Posterior vena cava (tissue), 2 donors: ENCODE measurements at regions of chr4 and their contacts with region 1.

Region 1: DNA sequence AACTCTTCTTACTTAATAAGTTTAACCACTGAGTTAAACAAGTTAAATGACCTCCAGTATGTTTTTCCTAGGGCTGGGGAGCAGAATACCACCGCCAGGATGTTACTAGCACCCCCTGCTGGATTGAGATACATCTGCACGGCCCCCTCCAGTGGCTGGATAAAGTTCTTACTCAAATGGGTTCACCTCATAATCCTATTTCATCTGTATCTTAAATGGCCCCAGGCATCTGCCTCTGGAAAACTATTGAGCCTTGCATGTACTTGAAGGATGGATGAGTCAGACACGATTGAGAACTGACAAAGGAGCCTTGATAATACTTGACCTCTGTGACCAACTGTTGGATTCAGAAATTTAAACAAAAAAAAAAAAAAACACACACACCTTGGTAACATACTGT is 61.5 kb upstream of the MMAA start:
- DNase-seq: no peak

Region 2: GRCh38 chr4:145234091-145234706 is 323.5 kb before region 1 on chr4:
- intact Hi-C with region 1: loop called in 1 of 2 experiments (anchors 5 kb)
- DNase-seq: no peak

Region 3: DNA sequence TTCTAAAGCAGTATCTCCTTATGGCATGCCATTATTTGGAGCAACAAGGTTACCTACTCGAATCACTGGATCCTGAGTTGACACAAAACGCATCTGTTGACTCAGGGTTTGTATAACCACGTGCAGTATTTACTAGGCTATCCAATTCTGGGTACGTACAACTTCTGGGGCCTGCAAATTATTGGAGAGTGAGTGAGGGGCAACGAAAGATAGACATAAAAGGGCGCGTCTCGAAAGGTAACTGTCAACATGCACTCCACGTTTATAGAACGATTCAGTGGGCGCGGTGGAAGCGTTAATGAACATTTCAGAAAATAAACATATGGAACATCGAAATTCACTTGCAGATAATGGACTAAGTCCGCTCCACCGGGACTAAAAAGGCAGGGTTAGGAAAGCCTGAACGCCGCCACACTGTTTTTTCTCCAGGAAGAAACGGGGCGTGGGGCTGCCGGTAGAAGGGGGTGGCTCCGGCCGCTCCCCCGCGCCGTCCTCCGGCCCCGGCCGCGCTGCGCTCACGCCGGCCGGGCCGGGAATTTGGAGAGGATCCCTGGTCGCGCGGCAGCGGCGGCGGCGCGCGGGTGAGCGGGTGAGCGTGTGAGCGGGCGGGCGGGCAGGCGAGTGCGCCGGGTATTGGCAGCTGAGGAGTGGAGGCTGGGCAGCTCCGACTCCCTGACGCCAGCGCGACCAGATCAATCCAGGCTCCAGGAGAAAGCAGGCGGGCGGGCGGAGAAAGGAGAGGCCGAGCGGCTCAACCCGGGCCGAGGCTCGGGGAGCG is 76.4 kb before region 1 on chr4 and contains the start of gene SMAD1:
- intact Hi-C with region 1: loop called in 1 of 2 experiments (anchors 10 kb)
- DNase-seq: peak; percentile 95
- total RNA-seq, gene SMAD1: 17.6 to 18.5 TPM